ENCODE measurements at regions of chr19 and their contacts with region 1.

Region 1: GRCh38 chr19:46081928-46082727 is 41.3 kb upstream of the IGFL4 start:
- DNase-seq: peak; percentile 48
- H3K4me3 ChIP-seq: no peak overlapping the region
- H3K27ac ChIP-seq: no peak overlapping the region
- H3K4me1 ChIP-seq: no peaks in the 10 kb centered on the region
- CTCF ChIP-seq: peak; percentile 78

Region 2: DNA sequence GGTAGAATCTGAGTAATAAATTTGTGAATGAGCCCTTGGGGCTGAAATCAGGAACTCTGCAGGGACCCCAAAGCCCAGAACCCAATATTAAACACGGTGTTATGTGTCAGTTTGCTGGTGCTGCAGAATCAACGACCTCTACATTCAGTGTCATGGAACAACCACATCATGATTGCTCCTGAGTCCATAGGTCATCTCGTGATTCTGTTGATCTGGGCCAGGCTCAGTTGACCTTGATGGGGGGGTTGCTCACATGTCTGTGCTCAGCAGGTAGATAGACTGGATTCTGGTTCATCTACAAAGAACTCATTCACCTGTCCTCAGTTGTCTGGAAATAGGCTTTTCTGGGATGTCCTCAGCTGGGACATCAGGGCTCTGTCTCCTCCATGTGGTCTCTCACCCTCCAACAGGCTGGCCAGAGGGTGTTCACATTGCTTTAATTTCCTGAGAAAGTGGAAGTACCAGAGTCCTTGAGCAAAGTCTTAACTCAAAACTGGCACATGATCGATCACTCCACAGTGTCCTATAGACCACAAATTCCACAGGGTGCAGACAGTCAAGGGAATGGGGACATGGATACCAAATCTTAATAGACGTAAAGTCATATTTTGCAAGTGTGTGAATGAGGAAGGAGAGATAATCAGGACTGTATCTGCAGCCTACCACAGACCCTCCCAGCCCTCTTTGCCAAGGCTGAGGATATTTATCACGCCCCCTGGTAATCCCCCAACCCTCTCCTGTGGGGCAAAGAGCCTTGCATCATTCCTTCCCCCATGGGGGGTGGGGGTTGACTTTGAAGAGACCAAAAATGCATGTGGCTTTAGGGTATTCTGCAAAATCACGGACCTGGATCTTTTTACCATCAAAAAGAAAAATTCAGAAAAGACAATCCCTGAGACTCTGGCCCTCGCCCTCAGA is 108.1 kb after region 1 on chr19:
- CTCF ChIA-PET with region 1: no interaction called
- POLR2A ChIA-PET with region 1: no interaction called
- intact Hi-C with region 1: loop called (anchors 2 kb)
- DNase-seq: no peak
- H3K4me3 ChIP-seq: no peak overlapping the region
- H3K27ac ChIP-seq: no peak overlapping the region
- H3K4me1 ChIP-seq: peaks cover 3% of the 10 kb centered on the region
- CTCF ChIP-seq: no peak

Region 3: DNA sequence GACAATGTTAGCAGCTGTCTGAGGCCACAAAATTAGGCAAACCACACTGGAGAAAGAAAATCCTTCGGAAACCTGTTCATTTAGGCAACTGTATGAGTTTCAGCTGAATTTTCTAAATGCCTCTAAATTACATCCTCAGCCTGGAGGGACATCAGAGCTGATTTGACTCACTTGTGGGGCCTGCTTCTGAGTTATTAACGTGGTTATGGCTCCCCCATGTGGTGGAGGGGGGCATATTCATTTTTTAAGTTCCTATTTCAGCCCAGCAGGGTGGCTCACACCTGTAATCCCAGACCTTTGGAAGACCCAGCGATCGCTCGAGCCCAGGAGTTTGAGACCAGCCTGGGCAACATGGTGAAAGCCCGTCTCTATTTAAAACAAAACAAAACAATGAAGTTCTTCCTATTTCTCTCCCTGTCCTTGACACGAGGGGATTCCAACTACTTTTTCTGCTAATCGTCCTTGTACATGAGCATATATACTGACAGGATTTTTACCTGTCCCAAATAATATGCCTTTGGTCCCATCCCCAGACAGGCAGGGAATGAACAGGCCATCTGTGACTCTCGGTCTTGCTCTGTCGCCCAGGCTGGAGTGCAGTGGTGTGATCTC is 183.2 kb after region 1 on chr19:
- CTCF ChIA-PET with region 1: no interaction called
- POLR2A ChIA-PET with region 1: no interaction called
- intact Hi-C with region 1: loop called (anchors 2 kb)
- DNase-seq: peak; percentile 81
- H3K4me3 ChIP-seq: no peak overlapping the region
- H3K27ac ChIP-seq: no peak overlapping the region
- H3K4me1 ChIP-seq: no peaks in the 10 kb centered on the region
- CTCF ChIP-seq: peak; percentile 89